Activated CD4-positive, alpha-beta memory T cell treated with anti-CD3 and anti-CD28 coated beads, Interleukin-2, amount 10 ng/mL, durations not matched to agents 7 days and 5 days (primary cell): ENCODE measurements at regions of chr5 and their contacts with region 1.

Region 1: GRCh38 chr5:132456296-132457001 is 34.1 kb downstream of the IRF1 start:
- DNase-seq: peak; percentile 75
- H3K4me3 Mint-ChIP-seq: peak overlapping the region; percentile 53
- H3K27ac Mint-ChIP-seq: peak overlapping the region; percentile 99
- H3K4me1 Mint-ChIP-seq: peaks cover 91% of the 10 kb centered on the region
- H3K27me3 Mint-ChIP-seq: no peaks in the 10 kb centered on the region

Region 2: GRCh38 chr5:132410451-132411381 is 45.7 kb before region 1 on chr5:
- CTCF ChIA-PET with region 1: interaction called, 8 read pairs
- POLR2A ChIA-PET with region 1: interaction called, 49 read pairs
- DNase-seq: peak; percentile 89
- H3K4me3 Mint-ChIP-seq: peak overlapping the region; percentile 95
- H3K27ac Mint-ChIP-seq: peak overlapping the region; percentile 99
- H3K4me1 Mint-ChIP-seq: peaks cover 59% of the 10 kb centered on the region
- H3K27me3 Mint-ChIP-seq: no peaks in the 10 kb centered on the region

Region 3: DNA sequence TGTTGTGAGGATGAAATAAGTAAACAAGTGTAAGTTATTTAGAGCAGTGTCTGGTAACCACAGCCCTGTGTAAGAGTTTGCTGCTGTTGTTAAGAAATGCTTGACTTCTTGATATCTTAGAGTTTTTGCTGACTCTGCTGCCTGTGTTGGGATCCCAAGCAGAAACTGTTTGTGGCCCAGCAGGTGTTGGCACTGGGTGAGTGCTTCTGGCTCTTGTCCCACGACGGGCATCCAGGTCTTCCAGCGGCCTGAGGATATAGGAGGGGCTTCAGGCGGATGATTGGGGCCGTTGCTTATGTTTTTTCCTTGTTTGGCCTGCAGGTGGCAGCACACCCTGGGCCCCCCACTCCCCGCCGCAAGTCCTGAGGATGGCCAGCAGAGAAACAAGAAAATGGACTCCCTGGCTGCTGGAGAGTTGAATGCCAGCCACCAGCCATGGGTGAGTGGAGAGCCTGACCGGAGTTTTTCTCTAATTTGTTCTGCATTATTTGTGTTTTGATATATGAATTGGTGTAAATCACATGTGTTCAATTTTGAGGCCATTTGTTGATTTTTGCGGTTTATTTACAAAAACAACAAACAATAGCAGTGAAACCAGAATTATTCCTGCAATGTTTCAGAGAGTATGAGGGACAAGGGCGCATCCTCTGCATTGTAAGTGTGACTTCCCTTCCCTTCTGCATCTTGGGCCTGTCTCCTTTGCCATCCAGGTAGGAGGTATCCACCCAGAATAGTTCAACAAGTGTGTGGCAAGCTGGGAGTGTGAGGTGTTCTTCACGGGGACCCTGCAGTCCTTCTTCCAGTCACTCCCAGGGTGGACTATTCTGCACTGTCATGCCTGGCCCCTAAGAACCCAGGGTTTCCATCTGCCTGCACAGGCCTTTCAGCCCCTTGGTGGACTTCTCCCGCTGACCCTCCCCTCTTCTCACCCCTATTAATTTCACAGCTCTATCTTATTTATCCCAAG is 36.7 kb before region 1 on chr5:
- CTCF ChIA-PET with region 1: interaction called, 104 read pairs
- POLR2A ChIA-PET with region 1: interaction called, 296 read pairs
- DNase-seq: peak; percentile 72
- H3K4me3 Mint-ChIP-seq: peak overlapping the region; percentile 65
- H3K27ac Mint-ChIP-seq: peak overlapping the region; percentile 91
- H3K4me1 Mint-ChIP-seq: peaks cover 95% of the 10 kb centered on the region
- H3K27me3 Mint-ChIP-seq: no peaks in the 10 kb centered on the region

Region 4: GRCh38 chr5:132437604-132438266 is 18.7 kb before region 1 on chr5:
- CTCF ChIA-PET with region 1: interaction called, 4 read pairs
- POLR2A ChIA-PET with region 1: interaction called, 85 read pairs
- DNase-seq: peak; percentile 72
- H3K4me3 Mint-ChIP-seq: peak overlapping the region; percentile 54
- H3K27ac Mint-ChIP-seq: peak overlapping the region; percentile 87
- H3K4me1 Mint-ChIP-seq: peaks cover 82% of the 10 kb centered on the region
- H3K27me3 Mint-ChIP-seq: no peaks in the 10 kb centered on the region

Region 5: GRCh38 chr5:132479111-132479951 is 22.9 kb after region 1 on chr5:
- CTCF ChIA-PET with region 1: interaction called, 48 read pairs
- POLR2A ChIA-PET with region 1: interaction called, 563 read pairs
- DNase-seq: no peak
- H3K4me3 Mint-ChIP-seq: no peak overlapping the region
- H3K27ac Mint-ChIP-seq: peak overlapping the region; percentile 58
- H3K4me1 Mint-ChIP-seq: peaks cover 87% of the 10 kb centered on the region
- H3K27me3 Mint-ChIP-seq: no peaks in the 10 kb centered on the region